ENCODE measurements at regions of chr1 and their contacts with region 1.

Region 1: GRCh38 chr1:228664399-228664914 is 70.8 kb upstream of the RHOU start:
- H3K4me3 ChIP-seq: no peak overlapping the region
- H3K27ac ChIP-seq: no peak overlapping the region
- H3K4me1 ChIP-seq: no peaks in the 10 kb centered on the region
- CTCF ChIP-seq: peak; percentile 90

Region 2: GRCh38 chr1:228691926-228692325 is 27.5 kb after region 1 on chr1:
- CTCF ChIA-PET with region 1: interaction called, 19 read pairs
- POLR2A ChIA-PET with region 1: no interaction called
- H3K4me3 ChIP-seq: no peak overlapping the region
- H3K27ac ChIP-seq: no peak overlapping the region
- H3K4me1 ChIP-seq: peaks cover 7% of the 10 kb centered on the region
- CTCF ChIP-seq: peak; percentile 24; the same call in 1 of the 2 replicates

Region 3: GRCh38 chr1:228702433-228702832 is 38.0 kb after region 1 on chr1:
- CTCF ChIA-PET with region 1: interaction called, 11 read pairs
- POLR2A ChIA-PET with region 1: no interaction called
- H3K4me3 ChIP-seq: no peak overlapping the region
- H3K27ac ChIP-seq: no peak overlapping the region
- H3K4me1 ChIP-seq: peaks cover 4% of the 10 kb centered on the region
- CTCF ChIP-seq: no peak

Region 4: DNA sequence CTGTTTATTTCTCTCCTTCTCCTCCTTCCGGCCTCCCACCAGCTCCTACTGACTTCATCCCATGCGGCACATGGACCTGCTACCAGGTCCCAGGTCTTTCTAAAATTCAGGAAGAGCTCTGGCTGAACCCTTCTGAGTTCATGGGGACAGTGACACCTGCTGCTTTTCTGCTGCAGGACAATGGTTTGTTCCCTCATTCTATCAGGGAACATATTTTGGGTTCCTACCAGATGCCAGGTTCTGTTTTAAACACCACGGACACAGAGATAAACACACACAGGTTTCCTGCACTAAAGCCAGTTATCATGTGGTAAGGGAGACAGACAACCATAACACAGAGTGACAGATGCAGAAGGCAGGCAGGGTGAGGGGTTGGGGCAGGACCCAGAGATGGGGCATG is 492.4 kb after region 1 on chr1:
- CTCF ChIA-PET with region 1: interaction called, 25 read pairs
- POLR2A ChIA-PET with region 1: no interaction called
- H3K4me3 ChIP-seq: no peak overlapping the region
- H3K27ac ChIP-seq: no peak overlapping the region
- H3K4me1 ChIP-seq: no peaks in the 10 kb centered on the region; the same call in 1 of the 2 replicates
- CTCF ChIP-seq: peak; percentile 71; the same call in 1 of the 2 replicates

Measured in HEK293 (cell line).